ENCODE measurements at regions of chr3 and their contacts with region 1.

Region 1: GRCh38 chr3:47009225-47010110 is 30.0 kb downstream of the NBEAL2 start:
- DNase-seq: peak; percentile 89 to 93
- ATAC-seq: peak; percentile 92 to 97 (median 96)
- H3K4me3 ChIP-seq: peak overlapping the region; percentile 38 to 83 (median 70)
- H3K27ac ChIP-seq: peak overlapping the region; percentile 81 to 95 (median 88)
- H3K4me1 ChIP-seq: peaks cover 5 to 20% (median 13%) of the 10 kb centered on the region in 9 donors
- H3K27me3 ChIP-seq: no peaks in the 10 kb centered on the region
- CTCF ChIP-seq: no peak

Region 2: GRCh38 chr3:47152578-47152977 is 143.1 kb after region 1 on chr3:
- intact Hi-C with region 1: loop called in 1 of 10 experiments (anchors 10 kb)
- DNase-seq: no peak
- ATAC-seq: peak in 1 of 8 donors; percentile 56
- H3K4me3 ChIP-seq: no peak overlapping the region
- H3K27ac ChIP-seq: no peak overlapping the region
- H3K4me1 ChIP-seq: peaks cover 0 to 73% (median 42%) of the 10 kb centered on the region in 9 donors
- H3K27me3 ChIP-seq: no peaks in the 10 kb centered on the region
- CTCF ChIP-seq: no peak

Region 3: DNA sequence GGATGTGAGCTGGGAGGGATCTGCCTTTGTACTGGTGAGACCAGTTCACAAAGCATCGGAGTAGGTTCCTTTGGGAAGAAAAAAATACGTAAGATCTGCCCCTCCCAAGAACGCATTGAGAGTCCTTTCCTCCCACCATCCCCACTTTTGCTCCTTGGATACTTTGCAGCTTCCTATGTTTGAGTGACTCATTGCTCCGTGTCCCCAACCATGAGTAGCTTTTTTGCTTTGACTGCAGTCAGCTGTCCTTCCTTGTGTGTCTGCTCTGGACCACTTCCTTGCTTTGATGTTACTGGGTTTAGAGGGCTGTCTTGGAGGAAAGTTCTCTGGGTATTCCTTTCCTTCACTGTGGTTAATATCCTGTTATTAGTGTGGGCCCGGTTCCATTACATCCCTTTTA is 328.2 kb after region 1 on chr3:
- intact Hi-C with region 1: loop called in 1 of 10 experiments (anchors 10 kb)
- DNase-seq: no peak
- ATAC-seq: no peak
- H3K4me3 ChIP-seq: no peak overlapping the region
- H3K27ac ChIP-seq: no peak overlapping the region
- H3K4me1 ChIP-seq: no peaks in the 10 kb centered on the region
- H3K27me3 ChIP-seq: no peaks in the 10 kb centered on the region
- CTCF ChIP-seq: no peak

Measured in heart right ventricle (tissue), 16 donors.